ENCODE measurements at regions of chr4 and their contacts with region 1.

Region 1: DNA sequence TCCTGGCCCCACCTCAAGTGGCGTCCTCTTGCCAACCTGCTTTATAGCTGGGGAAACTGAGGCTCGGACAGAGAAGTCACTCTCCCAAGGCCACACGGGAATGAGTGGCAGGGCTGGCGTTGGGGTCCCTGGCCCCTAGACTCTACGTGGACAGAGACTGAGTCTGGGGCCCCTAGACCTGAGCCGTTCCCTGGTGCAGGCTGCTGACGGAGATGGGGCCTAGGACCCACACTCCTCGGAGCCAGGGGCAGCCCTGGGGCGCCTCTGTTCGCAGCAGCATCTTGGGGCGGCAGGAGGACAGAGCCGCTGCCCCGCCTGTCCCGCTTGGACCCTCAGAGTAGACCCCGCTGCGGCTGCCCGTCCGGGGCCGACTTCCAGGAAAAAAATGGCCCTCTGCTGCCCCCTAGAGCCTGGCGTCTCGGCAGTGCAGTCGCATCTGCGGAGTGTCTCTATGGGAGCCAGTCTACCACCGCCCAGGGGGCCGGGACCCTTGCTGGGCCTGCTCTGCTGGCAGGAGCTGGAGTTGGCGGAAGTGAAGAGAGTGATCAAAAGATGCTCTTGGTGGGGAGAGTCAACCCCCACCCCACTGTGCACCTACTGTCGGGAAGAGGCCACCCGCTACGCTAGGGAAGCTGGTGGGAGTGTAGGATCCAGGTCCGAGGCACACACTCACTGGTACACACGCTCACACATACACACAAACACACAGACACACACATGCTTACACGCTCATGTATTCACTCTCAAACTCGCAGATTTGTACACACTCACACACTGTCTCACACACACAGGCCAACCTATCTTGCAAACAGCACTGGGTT is 220.1 kb downstream of the AFAP1 start:
- DNase-seq: peak in 6 of 7 donors; percentile 49 to 67 (median 62)
- H3K4me3 ChIP-seq: no peak overlapping the region
- H3K27ac ChIP-seq: no peak overlapping the region
- H3K4me1 ChIP-seq: no peaks in the 10 kb centered on the region
- H3K27me3 ChIP-seq: peaks cover 14% of the 10 kb centered on the region
- CTCF ChIP-seq: peak; percentile 58 to 80 (median 72)
- POLR2A ChIP-seq: no peak

Region 2: DNA sequence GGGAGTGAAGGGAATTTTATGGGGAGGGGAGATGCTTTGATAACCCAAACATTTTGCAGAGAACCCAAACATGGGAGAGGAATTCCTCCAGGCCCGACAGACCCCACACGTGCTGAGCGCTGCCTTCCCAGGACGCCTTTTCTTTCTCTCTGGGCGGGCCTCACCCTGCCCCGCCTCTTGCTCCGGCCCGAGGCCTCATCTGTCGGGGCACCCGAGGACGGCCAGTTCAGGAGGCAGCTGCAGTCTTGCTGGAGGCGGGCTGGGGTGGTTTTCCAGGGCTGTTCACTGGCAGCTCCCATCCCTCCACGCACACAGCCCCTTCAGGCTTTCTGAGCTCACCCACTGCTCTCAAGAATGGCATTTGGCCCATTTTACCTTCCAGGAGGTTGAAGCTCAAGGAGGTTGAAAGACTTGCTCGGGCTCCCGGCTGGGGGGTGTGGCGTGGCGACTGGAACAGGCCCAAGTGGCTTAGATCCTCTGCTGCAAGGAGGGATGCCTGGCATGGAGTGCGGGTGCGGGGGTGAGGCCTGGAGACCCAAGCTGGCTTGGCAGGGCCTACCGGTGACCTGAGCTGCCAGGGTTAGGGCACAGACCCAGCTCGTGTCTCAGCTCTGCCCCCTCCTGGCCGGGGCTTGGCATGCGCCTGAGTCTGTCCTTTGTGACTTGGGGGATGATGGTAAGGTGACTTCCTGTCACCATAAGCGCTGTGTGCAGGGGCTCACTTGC is 384.1 kb before region 1 on chr4:
- intact Hi-C with region 1: loop called in 1 of 2 experiments (anchors 10 kb)
- DNase-seq: peak; percentile 33 to 76 (median 64)
- H3K4me3 ChIP-seq: no peak overlapping the region
- H3K27ac ChIP-seq: no peak overlapping the region
- H3K4me1 ChIP-seq: no peaks in the 10 kb centered on the region
- H3K27me3 ChIP-seq: no peaks in the 10 kb centered on the region
- CTCF ChIP-seq: peak; percentile 39 to 73 (median 52)
- POLR2A ChIP-seq: no peak

Measured in adrenal gland (tissue), 19 donors.